OCI-LY7 (cell line): ENCODE measurements at regions of chr12 and their contacts with region 1.

Region 1: DNA sequence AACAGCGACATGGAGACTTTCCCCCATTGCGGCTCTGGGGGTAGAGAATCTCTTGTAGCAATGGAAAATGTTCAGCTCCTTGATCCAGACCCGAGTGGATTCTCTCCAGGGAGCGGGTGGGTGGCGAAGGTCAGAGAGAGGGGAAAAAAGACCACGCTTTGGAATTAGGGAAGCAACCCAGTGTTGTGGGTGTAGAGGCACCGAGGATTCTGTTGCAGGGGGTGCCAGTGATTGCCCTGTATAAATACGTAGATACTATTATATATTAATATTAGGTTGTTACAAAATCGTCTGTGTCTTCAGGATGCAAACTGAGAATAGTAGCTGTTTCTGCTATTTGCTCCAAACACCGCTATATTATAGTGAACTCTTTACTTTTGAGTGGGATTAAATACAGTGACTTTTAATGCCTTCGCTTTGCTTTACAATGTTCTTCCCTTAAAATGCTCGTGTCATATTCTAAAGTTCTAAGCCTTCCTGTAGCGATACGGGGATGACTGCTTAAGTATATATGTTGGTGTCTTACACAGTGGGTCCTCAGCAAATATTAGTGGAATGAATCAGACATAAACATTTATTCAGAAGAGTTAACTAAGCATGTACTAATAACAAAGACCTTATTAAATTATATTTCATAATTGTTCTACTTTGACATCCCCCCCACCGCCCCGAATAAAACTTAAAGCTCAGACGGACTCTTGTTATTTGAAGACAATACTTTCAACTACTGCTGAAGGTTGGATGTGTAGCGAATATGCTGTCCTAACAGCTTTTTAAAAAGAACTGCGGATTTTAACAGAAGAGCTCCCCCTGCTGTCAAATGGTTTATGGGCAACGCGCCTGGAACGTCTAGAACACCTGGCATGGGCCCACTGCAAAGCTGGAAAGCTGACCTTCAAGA is 136.4 kb upstream of the KRAS start:
- DNase-seq: peak; percentile 92
- H3K4me3 ChIP-seq: peak overlapping the region; percentile 77
- H3K27ac ChIP-seq: peak overlapping the region; percentile 83
- H3K4me1 ChIP-seq: peaks cover 46% of the 10 kb centered on the region
- CTCF ChIP-seq: peak; percentile 99

Region 2: DNA sequence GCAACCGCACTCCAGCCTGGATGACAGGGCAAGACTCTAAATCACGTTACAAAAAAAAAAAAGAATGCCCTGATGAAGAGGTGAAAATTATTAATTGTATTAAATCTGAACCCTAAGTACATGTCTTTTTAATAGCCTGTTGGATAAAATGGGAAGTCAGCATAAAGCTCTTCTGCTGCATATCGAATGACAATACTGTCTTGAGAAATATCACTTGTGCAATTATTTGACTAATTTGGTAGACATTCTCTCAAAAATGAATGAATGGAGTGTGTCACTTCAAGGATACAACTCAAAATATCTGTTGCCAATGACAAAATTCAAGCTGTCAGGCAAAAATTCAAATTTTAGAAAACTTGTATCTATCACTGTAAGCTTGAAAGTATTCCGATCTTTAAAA is 231.0 kb before region 1 on chr12:
- CTCF ChIA-PET with region 1: no interaction called
- POLR2A ChIA-PET with region 1: interaction called, 3 read pairs
- intact Hi-C with region 1: loop called (anchors 1 kb)
- DNase-seq: no peak
- H3K4me3 ChIP-seq: no peak overlapping the region
- H3K27ac ChIP-seq: no peak overlapping the region
- H3K4me1 ChIP-seq: peaks cover 28% of the 10 kb centered on the region
- CTCF ChIP-seq: no peak

Region 3: GRCh38 chr12:25208554-25208953 is 178.5 kb before region 1 on chr12:
- CTCF ChIA-PET with region 1: no interaction called
- POLR2A ChIA-PET with region 1: interaction called, 4 read pairs
- intact Hi-C with region 1: loop called (anchors 1 kb)
- DNase-seq: no peak
- H3K4me3 ChIP-seq: no peak overlapping the region
- H3K27ac ChIP-seq: no peak overlapping the region
- H3K4me1 ChIP-seq: no peaks in the 10 kb centered on the region
- CTCF ChIP-seq: no peak

Region 4: DNA sequence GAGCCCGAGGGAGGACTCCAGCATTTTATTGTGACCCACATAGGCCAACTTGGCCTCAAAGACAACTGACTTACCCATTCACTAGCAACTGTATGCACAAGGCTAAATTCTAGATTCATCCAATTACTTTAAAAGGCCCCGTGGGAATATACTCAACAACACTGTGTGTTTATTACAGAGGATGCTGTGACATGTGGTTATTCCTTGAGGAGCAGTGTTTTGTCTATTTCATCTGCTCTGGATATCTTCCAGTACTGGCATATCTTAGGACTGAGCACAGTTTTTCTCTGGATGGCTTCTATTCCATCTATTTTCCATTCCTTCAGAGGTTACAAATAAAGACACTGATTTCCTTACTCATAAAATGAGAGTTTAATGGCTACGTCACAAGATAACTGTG is 49.2 kb before region 1 on chr12:
- CTCF ChIA-PET with region 1: no interaction called
- POLR2A ChIA-PET with region 1: no interaction called
- intact Hi-C with region 1: no loop called
- DNase-seq: no peak
- H3K4me3 ChIP-seq: no peak overlapping the region
- H3K27ac ChIP-seq: no peak overlapping the region
- H3K4me1 ChIP-seq: peaks cover 6% of the 10 kb centered on the region
- CTCF ChIP-seq: no peak

Region 5: DNA sequence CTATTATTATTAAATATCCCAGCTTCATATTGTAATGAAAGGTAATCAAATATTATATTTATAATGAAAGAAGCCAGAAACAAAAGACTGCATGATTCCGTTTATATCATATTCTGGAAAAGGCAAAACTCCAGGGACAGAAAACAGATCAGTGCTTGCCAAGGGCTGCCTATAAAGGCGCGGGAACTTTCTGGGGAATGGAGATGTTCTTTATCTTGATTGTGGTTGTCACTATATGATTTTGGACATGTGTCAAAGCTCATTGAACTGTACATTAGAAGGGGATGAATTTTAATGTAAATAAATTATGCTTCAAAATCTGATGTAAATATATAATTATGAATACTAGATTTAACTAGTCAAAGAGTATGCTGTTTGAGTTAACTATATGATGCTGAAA is 21.0 kb before region 1 on chr12:
- CTCF ChIA-PET with region 1: no interaction called
- POLR2A ChIA-PET with region 1: interaction called, 14 read pairs
- intact Hi-C with region 1: no loop called
- DNase-seq: no peak
- H3K4me3 ChIP-seq: no peak overlapping the region
- H3K27ac ChIP-seq: no peak overlapping the region
- H3K4me1 ChIP-seq: peaks cover 8% of the 10 kb centered on the region
- CTCF ChIP-seq: no peak